CD4-positive, alpha-beta T cell (primary cell): ENCODE measurements at regions of chr19 and their contacts with region 1.

Region 1: GRCh38 chr19:49665351-49666119 is at the starts of genes BCL2L12 and IRF3:
- DNase-seq: peak; percentile 99 to 100 (median 99)
- ATAC-seq: peak; percentile 78
- H3K4me3 ChIP-seq: peak within 1 kb of the TSS; percentile 62
- H3K4me3 Mint-ChIP-seq: peak within 1 kb of the TSS; percentile 95
- H3K27ac ChIP-seq: peak within 1 kb of the TSS; percentile 57 to 90
- H3K27ac Mint-ChIP-seq: peak within 1 kb of the TSS; percentile 88
- H3K4me1 ChIP-seq: peaks cover 44% of the 10 kb centered on the region
- H3K4me1 Mint-ChIP-seq: peaks cover 18% of the 10 kb centered on the region
- H3K27me3 ChIP-seq: no peaks in the 10 kb centered on the region
- H3K27me3 Mint-ChIP-seq: no peaks in the 10 kb centered on the region
- CTCF ChIP-seq: no peak
- total RNA-seq, gene BCL2L12: 9.9 to 11.3 TPM
- total RNA-seq, gene IRF3: 109 to 119 TPM

Region 2: GRCh38 chr19:49580264-49581006 is 85.1 kb before region 1 on chr19 and contains the start of gene NOSIP:
- CTCF ChIA-PET with region 1: interaction called, 3 read pairs
- POLR2A ChIA-PET with region 1: interaction called, 10 read pairs
- intact Hi-C with region 1: no loop called
- DNase-seq: peak; percentile 93 to 98 (median 96)
- ATAC-seq: peak; percentile 98
- H3K4me3 ChIP-seq: peak within 1 kb of the TSS; percentile 75
- H3K4me3 Mint-ChIP-seq: peak within 1 kb of the TSS; percentile 90
- H3K27ac ChIP-seq: peak within 1 kb of the TSS in 1 of 2 donors; percentile 8
- H3K27ac Mint-ChIP-seq: peak within 1 kb of the TSS; percentile 67
- H3K4me1 ChIP-seq: peaks cover 18% of the 10 kb centered on the region
- H3K4me1 Mint-ChIP-seq: peaks cover 33% of the 10 kb centered on the region
- H3K27me3 ChIP-seq: no peaks in the 10 kb centered on the region
- H3K27me3 Mint-ChIP-seq: no peaks in the 10 kb centered on the region
- CTCF ChIP-seq: no peak
- total RNA-seq, gene NOSIP: 202 to 203 TPM

Region 3: DNA sequence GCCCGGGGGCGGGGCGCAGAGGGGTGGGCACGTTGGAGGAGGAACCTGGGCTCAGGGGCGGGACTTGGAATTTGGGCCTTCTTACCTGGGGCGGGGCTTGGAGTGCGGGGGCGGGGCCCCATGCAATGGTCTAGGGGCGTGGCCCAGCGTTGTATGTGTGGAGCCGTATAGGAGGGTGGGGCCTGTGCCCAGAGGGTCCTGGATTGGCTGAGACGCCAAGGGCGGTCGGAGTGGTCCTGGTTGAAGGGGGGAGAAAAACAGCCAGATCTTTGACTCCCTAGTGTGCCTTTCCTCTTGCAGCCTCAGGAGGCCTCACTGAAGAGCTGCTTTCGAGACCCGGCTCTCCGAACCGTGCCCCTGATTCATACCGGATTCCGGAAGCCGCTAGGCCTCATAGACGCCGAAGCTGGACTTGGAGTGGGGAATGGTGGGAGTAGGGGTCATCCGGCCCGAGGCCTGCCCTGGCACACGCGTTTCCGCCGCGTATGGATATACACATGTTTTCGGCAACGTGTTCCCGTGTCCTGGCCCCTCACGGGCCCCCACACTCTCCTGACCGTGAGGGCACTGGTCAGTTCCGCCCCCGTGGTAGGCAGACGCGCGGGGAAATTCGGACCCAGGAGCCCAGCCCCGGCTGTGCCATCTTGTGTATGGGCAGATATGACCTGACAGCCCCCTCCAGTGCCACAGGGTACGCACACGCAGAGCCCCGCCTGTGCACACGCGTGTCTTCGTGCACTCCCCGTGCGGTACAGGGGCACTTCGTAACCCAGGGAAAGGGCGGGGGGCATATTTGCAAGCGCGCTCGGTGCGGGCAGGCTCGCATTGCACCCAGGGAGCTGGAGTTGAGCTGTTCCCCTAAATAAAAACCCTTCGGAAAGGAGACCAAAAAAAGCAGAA is 75.2 kb before region 1 on chr19:
- CTCF ChIA-PET with region 1: no interaction called
- POLR2A ChIA-PET with region 1: interaction called, 42 read pairs
- intact Hi-C with region 1: loop called (anchors 2 kb)
- DNase-seq: peak; percentile 87 to 99 (median 94)
- ATAC-seq: peak; percentile 70
- H3K4me3 ChIP-seq: peak overlapping the region; percentile 96
- H3K4me3 Mint-ChIP-seq: peak overlapping the region; percentile 82
- H3K27ac ChIP-seq: peak overlapping the region; percentile 77 to 91
- H3K27ac Mint-ChIP-seq: peak overlapping the region; percentile 82
- H3K4me1 ChIP-seq: peaks cover 49% of the 10 kb centered on the region
- H3K4me1 Mint-ChIP-seq: peaks cover 41% of the 10 kb centered on the region
- H3K27me3 ChIP-seq: no peaks in the 10 kb centered on the region
- H3K27me3 Mint-ChIP-seq: no peaks in the 10 kb centered on the region
- CTCF ChIP-seq: no peak

Region 4: DNA sequence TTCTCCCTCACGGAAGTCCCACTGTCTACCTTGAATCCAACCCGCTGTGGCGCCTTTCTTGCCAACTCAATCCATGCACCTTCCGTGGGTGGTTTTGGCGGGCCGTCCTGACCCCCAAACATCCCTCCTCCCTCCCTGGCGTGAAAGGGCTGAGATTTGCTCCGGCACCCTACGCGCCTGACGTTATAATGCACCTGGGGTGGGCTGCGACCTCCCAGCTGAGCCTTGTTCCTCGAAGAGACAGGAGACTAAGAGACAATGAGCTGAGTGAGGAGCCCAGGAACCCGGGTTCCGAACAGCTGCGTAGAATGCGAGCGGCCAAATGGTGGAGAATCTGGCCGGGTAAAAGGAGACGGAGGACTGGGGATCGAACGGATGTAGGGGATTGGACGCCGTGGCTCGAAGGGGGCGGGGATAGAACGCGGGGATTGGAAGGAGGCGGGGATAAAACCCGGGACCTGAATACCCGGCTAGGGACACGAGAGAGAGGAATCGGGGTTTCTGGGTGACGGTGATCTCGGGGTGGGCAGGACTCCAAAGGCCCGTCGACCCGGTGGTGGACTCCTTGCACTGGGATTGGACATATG is 25.2 kb after region 1 on chr19 and contains the start of gene CPT1C:
- CTCF ChIA-PET with region 1: no interaction called
- POLR2A ChIA-PET with region 1: no interaction called
- intact Hi-C with region 1: loop called in 1 of 2 experiments (anchors 1 kb)
- DNase-seq: peak in 11 of 14 experiments; percentile 27 to 79 (median 53)
- ATAC-seq: peak; percentile 79
- H3K4me3 ChIP-seq: peak within 1 kb of the TSS; percentile 56
- H3K4me3 Mint-ChIP-seq: peak within 1 kb of the TSS; percentile 85
- H3K27ac ChIP-seq: no peak within 1 kb of the TSS
- H3K27ac Mint-ChIP-seq: peak within 1 kb of the TSS; percentile 24
- H3K4me1 ChIP-seq: peaks cover 30% of the 10 kb centered on the region
- H3K4me1 Mint-ChIP-seq: peaks cover 21% of the 10 kb centered on the region
- H3K27me3 ChIP-seq: peaks cover 14 to 15% of the 10 kb centered on the region in 2 experiments
- H3K27me3 Mint-ChIP-seq: peaks cover 25% of the 10 kb centered on the region
- CTCF ChIP-seq: no peak
- total RNA-seq, gene CPT1C: 0.47 to 0.59 TPM